K562 (cell line): ENCODE measurements at regions of chr17 and their contacts with region 1.

Region 1: DNA sequence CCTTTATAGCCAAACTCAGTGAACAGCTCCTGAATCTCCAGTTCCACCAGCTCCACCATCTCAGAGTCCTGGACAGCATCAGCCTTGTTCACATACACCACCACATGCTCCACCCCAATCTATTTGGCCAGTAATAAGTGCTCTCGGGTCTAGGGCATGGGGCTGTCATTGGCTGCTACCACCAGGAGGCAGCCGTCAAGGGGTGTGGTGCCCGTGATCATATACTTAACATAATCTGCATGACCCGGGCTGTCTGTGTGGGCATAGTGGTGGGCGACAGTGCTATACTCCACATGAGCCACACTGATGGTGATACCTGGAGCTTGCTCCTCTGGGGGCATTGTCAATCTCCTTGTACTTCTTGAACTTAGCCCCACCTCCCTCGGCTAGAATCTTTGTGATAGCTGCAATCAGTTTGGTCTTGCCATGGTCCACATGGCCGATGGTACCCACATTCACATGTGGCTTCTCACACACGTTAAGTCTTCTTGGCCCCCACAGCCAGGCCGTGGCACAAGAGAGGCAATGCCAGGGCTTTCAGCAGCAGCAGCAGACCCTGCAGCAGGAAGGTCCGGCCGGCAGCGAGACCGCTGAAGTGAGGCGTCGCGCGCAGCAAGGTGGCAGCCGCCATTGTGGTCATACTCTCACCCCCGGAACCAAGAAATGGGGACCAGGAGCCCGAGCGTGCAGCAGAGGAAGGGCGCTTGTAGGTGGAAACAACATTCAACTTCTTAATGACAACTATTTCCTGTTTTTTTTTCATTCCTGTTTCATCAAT is 210.3 kb upstream of the WSB1 start:
- DNase-seq: no peak
- ATAC-seq: no peak; the same call in 2 of the 3 replicates
- H3K4me3 ChIP-seq: no peak overlapping the region
- H3K27ac ChIP-seq: no peak overlapping the region
- H3K4me1 ChIP-seq: peaks cover 0 to 5% of the 10 kb centered on the region in 2 experiments; a peak in 4 of 5 replicates
- H3K27me3 ChIP-seq: no peaks in the 10 kb centered on the region
- CTCF ChIP-seq: no peak
- EP300 ChIP-seq: no peak
- POLR2A ChIP-seq: peak; percentile 44
- RAD21 ChIP-seq: no peak

Region 2: DNA sequence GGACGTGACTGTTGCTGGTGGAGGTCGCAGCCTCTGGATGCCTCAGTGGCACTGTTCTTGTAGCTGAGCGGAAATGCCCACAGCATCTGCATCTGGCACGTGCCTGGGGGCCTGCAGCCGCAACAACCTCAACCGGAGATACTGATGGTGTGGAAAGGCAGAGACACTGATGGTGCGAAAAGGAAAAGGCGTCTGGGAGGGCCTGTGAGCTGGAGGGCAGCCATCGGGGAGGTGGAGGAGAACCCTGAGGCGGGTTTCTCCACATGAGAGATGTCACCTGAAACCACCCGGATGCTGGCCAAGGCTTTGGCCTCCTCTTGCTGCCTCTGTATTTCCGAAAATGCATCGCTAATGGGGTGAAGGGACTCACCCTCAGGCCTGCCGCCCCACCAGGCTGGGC is 74.5 kb before region 1 on chr17:
- CTCF ChIA-PET with region 1: no interaction called
- POLR2A ChIA-PET with region 1: no interaction called
- in situ Hi-C with region 1: no loop called
- intact Hi-C with region 1: no loop called
- DNase-seq: no peak
- ATAC-seq: no peak
- H3K4me3 ChIP-seq: no peak overlapping the region
- H3K27ac ChIP-seq: no peak overlapping the region
- H3K4me1 ChIP-seq: no peaks in the 10 kb centered on the region
- H3K27me3 ChIP-seq: no peaks in the 10 kb centered on the region
- CTCF ChIP-seq: no peak
- EP300 ChIP-seq: no peak
- POLR2A ChIP-seq: no peak
- RAD21 ChIP-seq: no peak

Region 3: GRCh38 chr17:27072885-27073284 is 10.7 kb before region 1 on chr17:
- CTCF ChIA-PET with region 1: no interaction called
- POLR2A ChIA-PET with region 1: interaction called, 14 read pairs
- in situ Hi-C with region 1: no loop called
- intact Hi-C with region 1: no loop called
- DNase-seq: no peak
- ATAC-seq: no peak
- H3K4me3 ChIP-seq: no peak overlapping the region
- H3K27ac ChIP-seq: no peak overlapping the region
- H3K4me1 ChIP-seq: no peaks in the 10 kb centered on the region; a peak in 1 of 5 replicates
- H3K27me3 ChIP-seq: no peaks in the 10 kb centered on the region
- CTCF ChIP-seq: no peak
- EP300 ChIP-seq: no peak
- POLR2A ChIP-seq: no peak
- RAD21 ChIP-seq: no peak